ENCODE measurements at regions of chr18 and their contacts with region 1.

Region 1: DNA sequence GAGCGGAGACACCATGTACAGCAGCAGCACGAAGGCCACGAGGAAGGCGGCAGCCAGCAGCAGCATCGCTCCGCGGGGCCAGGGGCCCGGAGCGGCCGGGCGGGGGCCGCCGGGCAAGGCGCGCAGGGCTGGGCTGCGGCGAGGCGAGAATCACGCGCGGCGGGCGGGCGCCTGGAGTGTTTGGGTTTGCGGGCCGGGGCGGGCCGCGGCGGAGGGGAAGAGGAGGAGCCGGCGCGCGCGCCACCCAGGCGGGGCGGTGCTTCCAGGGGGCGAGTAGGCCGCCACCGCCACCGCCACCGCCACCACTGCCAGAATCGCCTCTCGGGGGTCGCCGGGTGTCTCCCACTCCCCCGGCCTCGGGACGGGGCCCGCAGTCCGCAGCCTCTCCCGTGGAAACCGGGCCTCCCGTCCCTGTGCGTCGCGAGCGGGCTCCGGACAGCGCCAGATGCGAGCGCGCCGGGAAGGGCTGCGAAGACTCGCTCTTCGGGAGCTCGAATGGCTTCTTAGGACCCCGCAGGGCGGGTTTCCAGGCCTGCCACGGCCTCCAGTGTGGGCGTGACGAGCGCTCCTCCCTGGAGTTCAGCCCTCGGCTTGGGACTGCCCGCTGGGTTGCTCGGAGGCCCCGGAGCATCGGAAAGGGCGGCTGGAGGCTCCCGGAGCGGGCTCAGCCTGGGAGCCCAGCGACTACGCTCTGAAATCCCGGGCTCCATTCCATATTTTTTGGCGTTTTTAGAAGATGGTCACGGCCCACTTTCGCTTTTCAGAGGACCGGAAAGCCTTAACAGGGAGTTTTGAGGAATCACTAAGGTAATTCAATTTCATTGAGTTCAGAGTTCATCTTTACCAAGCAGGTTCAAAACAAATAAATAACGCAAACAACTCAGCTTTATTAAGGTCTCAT is at the start of gene KDSR:
- DNase-seq: peak; percentile 47 to 87 (median 74)
- ATAC-seq: peak; percentile 88 to 92 (median 90)
- H3K4me3 ChIP-seq: peak within 1 kb of the TSS; percentile 92 to 94
- H3K4me3 Mint-ChIP-seq: peak within 1 kb of the TSS; percentile 86 to 93 (median 87)
- H3K27ac ChIP-seq: peak within 1 kb of the TSS; percentile 68
- H3K27ac Mint-ChIP-seq: peak within 1 kb of the TSS; percentile 84 to 86
- H3K4me1 ChIP-seq: peaks cover 7 to 33% of the 10 kb centered on the region in 2 experiments
- H3K4me1 Mint-ChIP-seq: peaks cover 42 to 46% (median 46%) of the 10 kb centered on the region in 3 donors
- H3K27me3 ChIP-seq: no peaks in the 10 kb centered on the region
- H3K27me3 Mint-ChIP-seq: no peaks in the 10 kb centered on the region
- total RNA-seq, gene KDSR: 25.2 to 69.1 (median 56.3) TPM

Region 2: DNA sequence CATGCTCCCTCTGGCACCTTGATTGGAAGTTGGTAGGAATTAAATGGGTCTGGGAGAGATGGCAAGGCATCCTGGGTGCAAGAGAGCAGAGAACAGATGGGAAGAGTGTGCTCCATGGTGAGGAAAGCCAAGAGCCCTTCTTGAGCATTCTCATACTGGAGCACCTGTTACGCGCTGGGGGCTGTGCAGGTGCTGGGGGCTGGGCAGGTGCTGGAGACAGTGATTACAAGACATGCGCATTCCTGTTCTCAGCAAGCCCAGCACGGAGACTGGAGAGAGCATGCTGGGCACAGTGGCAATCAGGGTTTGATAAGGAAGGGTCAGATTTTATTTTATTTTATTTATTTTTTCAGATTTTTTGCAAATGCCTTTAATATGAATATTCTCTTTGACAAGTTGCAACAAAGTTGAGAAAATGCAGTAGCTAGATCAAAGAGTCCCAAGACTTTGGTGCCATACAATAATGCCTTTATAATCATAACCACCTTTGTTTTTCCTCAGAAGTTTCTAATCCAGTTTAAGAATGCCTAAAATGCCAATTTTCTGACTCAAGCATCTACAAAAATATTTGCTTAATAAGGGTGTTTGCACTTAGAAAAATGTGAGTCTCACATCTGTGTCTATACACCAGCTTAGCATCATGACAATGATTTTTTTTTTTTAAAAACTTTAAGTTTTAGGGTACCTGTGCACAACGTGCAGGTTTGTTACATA is 1667.7 kb before region 1 on chr18:
- CTCF ChIA-PET with region 1: no interaction called
- POLR2A ChIA-PET with region 1: no interaction called
- DNase-seq: no peak
- ATAC-seq: no peak
- H3K4me3 ChIP-seq: no peak overlapping the region
- H3K4me3 Mint-ChIP-seq: no peak overlapping the region
- H3K27ac ChIP-seq: no peak overlapping the region
- H3K27ac Mint-ChIP-seq: no peak overlapping the region
- H3K4me1 ChIP-seq: no peaks in the 10 kb centered on the region
- H3K4me1 Mint-ChIP-seq: no peaks in the 10 kb centered on the region
- H3K27me3 ChIP-seq: peaks cover 0 to 2% of the 10 kb centered on the region in 2 experiments
- H3K27me3 Mint-ChIP-seq: peaks cover 6 to 24% of the 10 kb centered on the region in 2 donors

Region 3: DNA sequence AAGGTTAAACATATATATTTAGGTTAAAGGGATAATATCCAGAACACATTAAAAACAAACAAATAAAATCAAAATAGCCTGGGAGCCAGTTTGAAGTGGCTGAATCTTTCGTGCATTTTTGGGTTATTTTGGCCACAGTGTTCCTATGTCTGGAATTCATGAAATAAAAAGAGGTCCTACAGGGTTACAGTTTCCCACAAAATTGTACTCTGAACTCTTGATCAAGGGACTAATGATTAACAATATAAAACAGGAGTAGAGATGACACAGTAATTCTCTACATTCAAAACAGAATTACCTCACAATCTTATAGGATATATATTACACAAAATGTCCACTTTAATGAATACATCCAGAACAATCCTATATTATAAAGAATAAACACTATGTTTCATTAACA is 30.0 kb after region 1 on chr18:
- CTCF ChIA-PET with region 1: interaction called in 1 of 2 experiments, 5 read pairs
- POLR2A ChIA-PET with region 1: interaction called, 3 to 10 read pairs
- DNase-seq: no peak
- ATAC-seq: no peak
- H3K4me3 ChIP-seq: no peak overlapping the region
- H3K4me3 Mint-ChIP-seq: no peak overlapping the region
- H3K27ac ChIP-seq: no peak overlapping the region
- H3K27ac Mint-ChIP-seq: no peak overlapping the region
- H3K4me1 ChIP-seq: no peaks in the 10 kb centered on the region
- H3K4me1 Mint-ChIP-seq: peaks cover 10 to 11% (median 11%) of the 10 kb centered on the region in 3 donors
- H3K27me3 ChIP-seq: no peaks in the 10 kb centered on the region
- H3K27me3 Mint-ChIP-seq: no peaks in the 10 kb centered on the region